ENCODE measurements at regions of chr12 and their contacts with region 1.

Region 1: DNA sequence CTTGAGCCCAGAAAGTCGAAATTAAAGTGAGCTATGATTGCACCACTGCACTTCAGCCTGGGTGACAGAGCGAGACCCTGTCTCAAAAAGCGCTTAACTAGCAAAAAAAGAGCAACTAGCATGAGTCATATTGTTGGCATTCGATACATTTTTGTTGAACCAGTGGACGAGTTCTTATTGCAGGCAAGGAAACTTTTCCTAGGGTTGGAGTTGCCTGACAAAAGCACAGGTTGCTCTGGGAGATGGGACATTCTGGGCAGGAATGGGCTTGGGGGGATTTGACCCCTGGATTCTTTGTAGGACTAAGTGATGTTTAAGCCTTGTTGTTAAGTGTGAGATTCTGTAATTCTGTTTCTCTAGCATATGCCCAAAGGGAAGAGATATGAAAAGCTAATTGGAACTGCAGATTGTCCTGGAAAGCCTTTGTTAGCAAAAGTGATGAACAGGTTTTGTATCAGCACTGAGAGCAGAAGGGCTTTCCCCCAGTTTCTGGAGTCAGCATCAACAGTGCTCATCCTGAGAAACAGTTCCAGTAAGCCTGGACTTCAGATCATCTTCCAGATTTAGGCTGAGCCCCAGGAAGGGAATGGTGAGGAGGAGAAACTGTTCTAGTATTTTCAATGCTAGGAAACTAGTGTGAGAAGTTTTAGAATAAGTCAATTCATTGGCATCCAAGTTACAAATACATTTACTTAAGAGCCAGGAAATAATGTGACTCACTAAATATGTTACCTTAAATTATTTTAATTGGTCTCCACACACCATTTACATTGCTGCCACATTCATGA is 123.1 kb downstream of the SRGAP1 start:
- DNase-seq: no peak
- ATAC-seq: no peak
- H3K4me3 ChIP-seq: no peak overlapping the region
- H3K4me3 Mint-ChIP-seq: no peak overlapping the region
- H3K27ac ChIP-seq: no peak overlapping the region
- H3K27ac Mint-ChIP-seq: no peak overlapping the region
- H3K4me1 ChIP-seq: no peaks in the 10 kb centered on the region
- H3K4me1 Mint-ChIP-seq: no peaks in the 10 kb centered on the region
- H3K27me3 ChIP-seq: no peaks in the 10 kb centered on the region
- H3K27me3 Mint-ChIP-seq: peaks cover 0 to 4% of the 10 kb centered on the region in 2 donors

Region 2: DNA sequence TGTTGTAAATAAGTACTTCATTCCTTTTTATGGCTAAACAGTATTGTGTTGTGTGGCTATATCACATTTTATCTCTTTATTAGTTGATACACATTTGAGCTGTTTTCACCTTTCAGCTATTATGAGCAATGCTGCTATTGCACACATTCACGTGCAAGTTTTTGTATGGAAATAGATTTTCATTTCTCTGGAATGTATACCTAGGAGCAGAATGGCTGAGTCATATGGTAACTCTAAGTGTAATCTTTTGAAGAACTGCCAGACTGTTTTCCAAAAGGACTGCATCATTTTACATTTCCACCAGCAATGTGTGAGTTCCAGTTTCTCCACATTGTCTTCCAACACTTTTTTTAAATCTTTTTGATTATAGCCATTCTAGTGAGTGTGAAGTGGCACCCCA is 11.0 kb after region 1 on chr12:
- CTCF ChIA-PET with region 1: interaction called in 1 of 2 experiments, 10 read pairs
- POLR2A ChIA-PET with region 1: no interaction called
- DNase-seq: no peak
- ATAC-seq: no peak
- H3K4me3 ChIP-seq: no peak overlapping the region
- H3K4me3 Mint-ChIP-seq: no peak overlapping the region
- H3K27ac ChIP-seq: no peak overlapping the region
- H3K27ac Mint-ChIP-seq: no peak overlapping the region
- H3K4me1 ChIP-seq: no peaks in the 10 kb centered on the region
- H3K4me1 Mint-ChIP-seq: no peaks in the 10 kb centered on the region
- H3K27me3 ChIP-seq: peaks cover 0 to 7% of the 10 kb centered on the region in 2 experiments
- H3K27me3 Mint-ChIP-seq: peaks cover 5 to 17% of the 10 kb centered on the region in 2 donors

Region 3: DNA sequence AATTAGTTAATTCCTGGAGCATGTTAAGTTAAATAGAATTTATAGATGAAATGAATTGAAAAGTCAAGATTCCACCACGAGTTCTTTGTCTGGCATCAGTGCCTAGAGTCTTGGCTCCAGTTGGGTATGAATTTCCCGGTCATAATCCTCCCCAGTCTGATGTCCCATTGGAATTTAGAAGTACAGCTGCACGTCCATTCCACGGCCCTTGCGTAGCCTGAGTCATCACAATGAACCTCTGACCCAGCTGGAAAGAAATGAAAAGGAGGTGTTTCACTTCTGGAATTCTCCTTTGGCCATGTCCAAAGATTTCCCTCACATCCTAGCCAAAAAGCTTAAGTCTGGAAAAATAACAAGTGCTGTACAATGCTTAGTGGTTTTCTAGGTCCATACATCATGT is 131.8 kb after region 1 on chr12:
- CTCF ChIA-PET with region 1: no interaction called
- POLR2A ChIA-PET with region 1: no interaction called
- DNase-seq: no peak
- ATAC-seq: no peak
- H3K4me3 ChIP-seq: no peak overlapping the region
- H3K4me3 Mint-ChIP-seq: no peak overlapping the region
- H3K27ac ChIP-seq: no peak overlapping the region
- H3K27ac Mint-ChIP-seq: no peak overlapping the region
- H3K4me1 ChIP-seq: no peaks in the 10 kb centered on the region
- H3K4me1 Mint-ChIP-seq: no peaks in the 10 kb centered on the region
- H3K27me3 ChIP-seq: peaks cover 0 to 8% of the 10 kb centered on the region in 2 experiments
- H3K27me3 Mint-ChIP-seq: peaks cover 15 to 16% of the 10 kb centered on the region in 2 donors

Region 4: DNA sequence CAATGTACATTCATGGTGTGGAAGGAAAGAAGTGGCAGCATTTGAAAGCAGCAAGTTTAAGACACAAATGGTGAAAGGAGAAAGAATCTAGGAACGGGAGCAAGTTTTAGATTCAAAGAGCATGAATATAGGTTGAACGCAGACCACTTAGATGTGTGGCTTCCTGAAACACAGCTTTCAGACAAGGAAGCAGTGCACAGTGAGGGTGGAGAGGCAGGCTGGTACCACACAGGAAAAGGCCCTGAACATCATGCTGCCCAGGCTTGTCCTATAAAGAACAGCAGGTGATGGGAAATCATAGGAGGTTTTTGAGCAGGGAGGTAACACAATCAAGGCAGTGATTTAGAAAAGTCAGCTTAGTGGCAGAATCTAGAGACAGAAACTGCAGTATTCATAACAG is 756.1 kb after region 1 on chr12:
- CTCF ChIA-PET with region 1: no interaction called
- POLR2A ChIA-PET with region 1: no interaction called
- DNase-seq: peak in 1 of 35 experiments; percentile 13
- ATAC-seq: peak in 3 of 4 experiments; percentile 38 to 65 (median 40)
- H3K4me3 ChIP-seq: no peak overlapping the region
- H3K4me3 Mint-ChIP-seq: no peak overlapping the region
- H3K27ac ChIP-seq: no peak overlapping the region
- H3K27ac Mint-ChIP-seq: peak overlapping the region; percentile 55 to 64
- H3K4me1 ChIP-seq: peaks cover 2 to 9% of the 10 kb centered on the region in 2 experiments
- H3K4me1 Mint-ChIP-seq: peaks cover 8 to 13% (median 9%) of the 10 kb centered on the region in 3 donors
- H3K27me3 ChIP-seq: no peaks in the 10 kb centered on the region
- H3K27me3 Mint-ChIP-seq: no peaks in the 10 kb centered on the region

Measured in T-cell (primary cell).